Transverse colon (tissue), 4 donors: ENCODE measurements at regions of chr3 and their contacts with region 1.

Region 1: GRCh38 chr3:150721285-150722130 is 17.8 kb upstream of the ERICH6 start:
- DNase-seq: no peak
- H3K4me3 ChIP-seq: no peak overlapping the region
- H3K27ac ChIP-seq: no peak overlapping the region
- H3K4me1 ChIP-seq: peaks cover 0 to 16% (median 7%) of the 10 kb centered on the region in 4 donors
- H3K27me3 ChIP-seq: no peaks in the 10 kb centered on the region
- CTCF ChIP-seq: peak; percentile 82 to 93 (median 87)
- EP300 ChIP-seq: no peak
- POLR2A ChIP-seq: no peak

Region 2: DNA sequence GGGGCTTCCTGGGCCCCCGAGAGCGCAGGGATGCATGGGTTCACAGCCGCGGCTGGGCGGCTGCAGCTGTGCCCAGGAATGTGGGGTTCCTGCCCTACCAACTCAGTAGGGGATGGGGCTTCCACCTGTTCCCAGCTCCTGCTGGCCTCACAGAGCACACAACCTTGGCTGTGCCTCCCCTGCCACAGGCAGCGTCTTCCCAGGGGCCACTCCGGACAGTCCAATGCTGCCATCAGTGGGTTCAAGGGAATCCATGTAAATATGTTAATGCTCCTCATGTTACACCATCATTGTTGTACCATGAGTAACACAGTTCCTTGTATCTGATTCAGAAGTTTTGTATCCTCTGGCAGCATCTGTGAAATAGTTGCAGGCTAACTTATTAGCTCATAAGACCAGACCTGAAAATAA is 53.6 kb after region 1 on chr3:
- in situ Hi-C with region 1: loop called in 3 of 4 experiments (anchors 10 kb)
- intact Hi-C with region 1: loop called (anchors 10 kb)
- DNase-seq: no peak
- H3K4me3 ChIP-seq: no peak overlapping the region
- H3K27ac ChIP-seq: no peak overlapping the region
- H3K4me1 ChIP-seq: no peaks in the 10 kb centered on the region
- H3K27me3 ChIP-seq: no peaks in the 10 kb centered on the region
- CTCF ChIP-seq: no peak
- EP300 ChIP-seq: no peak
- POLR2A ChIP-seq: no peak

Region 3: DNA sequence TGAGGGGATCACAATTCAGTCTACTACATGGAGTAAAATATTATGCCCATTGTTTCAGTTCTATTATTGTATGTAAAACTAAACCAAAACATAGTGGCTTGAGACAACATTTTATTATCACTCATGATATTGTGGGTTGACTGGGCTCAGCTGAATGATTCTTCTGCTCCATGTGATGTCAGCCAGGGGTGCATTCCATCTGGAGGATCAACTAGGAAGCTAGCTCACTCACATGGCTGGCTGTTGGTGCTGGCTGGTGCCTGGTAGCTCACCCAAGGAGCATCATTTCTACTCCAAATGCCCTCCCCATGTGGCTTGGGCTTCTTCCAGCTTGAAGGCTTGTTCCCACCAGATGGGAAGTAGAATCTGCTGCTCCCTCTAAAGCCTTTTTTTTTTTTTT is 302.8 kb after region 1 on chr3:
- in situ Hi-C with region 1: no loop called
- intact Hi-C with region 1: no loop called
- DNase-seq: no peak
- H3K4me3 ChIP-seq: no peak overlapping the region
- H3K27ac ChIP-seq: no peak overlapping the region
- H3K4me1 ChIP-seq: no peaks in the 10 kb centered on the region
- H3K27me3 ChIP-seq: peaks cover 4% of the 10 kb centered on the region
- CTCF ChIP-seq: no peak
- EP300 ChIP-seq: no peak
- POLR2A ChIP-seq: no peak